ENCODE measurements at regions of chr9 and their contacts with region 1.

Region 1: GRCh38 chr9:136283291-136284235 is 20.3 kb downstream of the CCDC187 start:
- DNase-seq: peak; percentile 89
- ATAC-seq: peak; percentile 84
- H3K4me3 ChIP-seq: peak overlapping the region in 4 of 5 experiments; percentile 10 to 53 (median 39)
- H3K4me3 Mint-ChIP-seq: peak overlapping the region; percentile 94
- H3K27ac ChIP-seq: peak overlapping the region in 1 of 2 donors; percentile 33
- H3K27ac Mint-ChIP-seq: peak overlapping the region; percentile 86
- H3K4me1 ChIP-seq: peaks cover 18 to 25% of the 10 kb centered on the region in 2 donors
- H3K4me1 Mint-ChIP-seq: peaks cover 23% of the 10 kb centered on the region
- H3K27me3 ChIP-seq: peaks cover 0 to 3% (median 0%) of the 10 kb centered on the region in 4 experiments
- H3K27me3 Mint-ChIP-seq: peaks cover 13% of the 10 kb centered on the region
- CTCF ChIP-seq: peak; percentile 92

Region 2: GRCh38 chr9:135971892-135972291 is 311.7 kb before region 1 on chr9:
- CTCF ChIA-PET with region 1: interaction called, 9 read pairs
- POLR2A ChIA-PET with region 1: no interaction called
- intact Hi-C with region 1: loop called (anchors 1 kb)
- DNase-seq: peak; percentile 57
- ATAC-seq: no peak
- H3K4me3 ChIP-seq: no peak overlapping the region
- H3K4me3 Mint-ChIP-seq: no peak overlapping the region
- H3K27ac ChIP-seq: no peak overlapping the region
- H3K27ac Mint-ChIP-seq: no peak overlapping the region
- H3K4me1 ChIP-seq: peaks cover 0 to 8% of the 10 kb centered on the region in 2 donors
- H3K4me1 Mint-ChIP-seq: peaks cover 7% of the 10 kb centered on the region
- H3K27me3 ChIP-seq: peaks cover 0 to 17% (median 1%) of the 10 kb centered on the region in 4 experiments
- H3K27me3 Mint-ChIP-seq: peaks cover 29% of the 10 kb centered on the region
- CTCF ChIP-seq: no peak

Region 3: GRCh38 chr9:136096505-136097001 is 187.0 kb before region 1 on chr9:
- CTCF ChIA-PET with region 1: no interaction called
- POLR2A ChIA-PET with region 1: no interaction called
- intact Hi-C with region 1: no loop called
- DNase-seq: no peak
- ATAC-seq: no peak
- H3K4me3 ChIP-seq: no peak overlapping the region
- H3K4me3 Mint-ChIP-seq: peak overlapping the region; percentile 44
- H3K27ac ChIP-seq: no peak overlapping the region
- H3K27ac Mint-ChIP-seq: no peak overlapping the region
- H3K4me1 ChIP-seq: peaks cover 10 to 12% of the 10 kb centered on the region in 2 donors
- H3K4me1 Mint-ChIP-seq: peaks cover 6% of the 10 kb centered on the region
- H3K27me3 ChIP-seq: peaks cover 0 to 41% (median 8%) of the 10 kb centered on the region in 4 experiments
- H3K27me3 Mint-ChIP-seq: peaks cover 20% of the 10 kb centered on the region
- CTCF ChIP-seq: no peak

Region 4: GRCh38 chr9:136133191-136133958 is 150.2 kb before region 1 on chr9:
- CTCF ChIA-PET with region 1: interaction called, 25 read pairs
- POLR2A ChIA-PET with region 1: no interaction called
- intact Hi-C with region 1: loop called (anchors 1 kb)
- DNase-seq: peak; percentile 61
- ATAC-seq: peak; percentile 68
- H3K4me3 ChIP-seq: peak overlapping the region in 4 of 5 experiments; percentile 11 to 56 (median 42)
- H3K4me3 Mint-ChIP-seq: peak overlapping the region; percentile 64
- H3K27ac ChIP-seq: no peak overlapping the region
- H3K27ac Mint-ChIP-seq: no peak overlapping the region
- H3K4me1 ChIP-seq: peaks cover 9 to 18% of the 10 kb centered on the region in 2 donors
- H3K4me1 Mint-ChIP-seq: peaks cover 10% of the 10 kb centered on the region
- H3K27me3 ChIP-seq: peaks cover 0 to 48% (median 13%) of the 10 kb centered on the region in 4 experiments
- H3K27me3 Mint-ChIP-seq: peaks cover 40% of the 10 kb centered on the region
- CTCF ChIP-seq: peak; percentile 51

Region 5: DNA sequence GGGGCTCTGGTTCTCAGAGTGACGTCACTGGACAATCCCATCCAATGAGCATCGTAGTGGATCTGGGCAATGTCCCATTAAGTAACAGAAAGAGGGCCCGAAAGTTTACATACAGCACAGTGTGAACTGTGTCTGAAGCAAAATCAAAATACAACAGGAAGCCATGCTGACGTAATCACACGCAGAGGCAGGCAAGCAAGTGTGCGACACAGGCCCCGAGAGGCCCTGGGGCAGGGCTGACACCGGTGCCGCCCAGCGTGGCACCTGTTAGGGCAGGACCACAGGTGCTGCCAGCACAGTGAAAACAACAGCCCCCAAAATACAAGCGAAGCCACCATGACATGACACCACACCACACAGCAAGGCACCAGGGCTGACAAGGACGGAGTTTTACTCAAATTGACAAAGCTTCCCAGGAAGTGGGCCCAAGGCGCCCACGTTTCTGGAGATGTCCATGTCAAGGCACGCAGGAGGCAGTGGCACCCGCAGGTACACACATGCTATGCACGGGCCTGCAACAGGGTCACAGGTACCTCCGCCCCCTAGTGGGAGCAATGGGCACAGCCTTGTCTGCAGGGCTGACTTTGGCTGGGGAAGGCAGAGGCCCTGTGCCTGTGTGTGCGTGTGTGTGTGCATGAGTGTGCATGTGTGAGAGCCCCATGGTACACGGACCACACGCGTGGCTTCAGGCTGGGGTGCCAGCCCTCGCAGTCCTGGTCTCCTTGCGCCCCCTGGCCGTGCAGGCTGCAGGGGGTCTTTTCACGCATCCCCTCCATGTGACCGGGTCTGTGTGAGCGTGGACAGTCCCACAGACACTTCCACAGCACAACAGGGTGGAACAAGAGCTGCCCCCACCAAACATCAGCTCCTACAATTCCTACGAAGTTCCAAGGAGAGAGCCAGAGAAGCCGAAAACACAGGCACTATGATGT is 57.5 kb before region 1 on chr9:
- CTCF ChIA-PET with region 1: interaction called, 9 read pairs
- POLR2A ChIA-PET with region 1: no interaction called
- intact Hi-C with region 1: loop called (anchors 1 kb)
- DNase-seq: peak; percentile 95
- ATAC-seq: peak; percentile 76
- H3K4me3 ChIP-seq: peak overlapping the region in 4 of 5 experiments; percentile 19 to 47 (median 35)
- H3K4me3 Mint-ChIP-seq: peak overlapping the region; percentile 86
- H3K27ac ChIP-seq: peak overlapping the region; percentile 95 to 100
- H3K27ac Mint-ChIP-seq: peak overlapping the region; percentile 98
- H3K4me1 ChIP-seq: peaks cover 40 to 73% of the 10 kb centered on the region in 2 donors
- H3K4me1 Mint-ChIP-seq: peaks cover 79% of the 10 kb centered on the region
- H3K27me3 ChIP-seq: no peaks in the 10 kb centered on the region
- H3K27me3 Mint-ChIP-seq: no peaks in the 10 kb centered on the region
- CTCF ChIP-seq: peak; percentile 94

Region 6: GRCh38 chr9:136267261-136268111 is 16.1 kb before region 1 on chr9:
- CTCF ChIA-PET with region 1: interaction called, 26 read pairs
- POLR2A ChIA-PET with region 1: interaction called, 5 read pairs
- intact Hi-C with region 1: loop called (anchors 1 kb)
- DNase-seq: peak; percentile 90
- ATAC-seq: peak; percentile 98
- H3K4me3 ChIP-seq: peak overlapping the region in 4 of 5 experiments; percentile 55 to 69 (median 62)
- H3K4me3 Mint-ChIP-seq: peak overlapping the region; percentile 85
- H3K27ac ChIP-seq: peak overlapping the region; percentile 50 to 66
- H3K27ac Mint-ChIP-seq: peak overlapping the region; percentile 84
- H3K4me1 ChIP-seq: peaks cover 7 to 16% of the 10 kb centered on the region in 2 donors
- H3K4me1 Mint-ChIP-seq: peaks cover 11% of the 10 kb centered on the region
- H3K27me3 ChIP-seq: no peaks in the 10 kb centered on the region
- H3K27me3 Mint-ChIP-seq: peaks cover 3% of the 10 kb centered on the region
- CTCF ChIP-seq: peak; percentile 38

Region 7: DNA sequence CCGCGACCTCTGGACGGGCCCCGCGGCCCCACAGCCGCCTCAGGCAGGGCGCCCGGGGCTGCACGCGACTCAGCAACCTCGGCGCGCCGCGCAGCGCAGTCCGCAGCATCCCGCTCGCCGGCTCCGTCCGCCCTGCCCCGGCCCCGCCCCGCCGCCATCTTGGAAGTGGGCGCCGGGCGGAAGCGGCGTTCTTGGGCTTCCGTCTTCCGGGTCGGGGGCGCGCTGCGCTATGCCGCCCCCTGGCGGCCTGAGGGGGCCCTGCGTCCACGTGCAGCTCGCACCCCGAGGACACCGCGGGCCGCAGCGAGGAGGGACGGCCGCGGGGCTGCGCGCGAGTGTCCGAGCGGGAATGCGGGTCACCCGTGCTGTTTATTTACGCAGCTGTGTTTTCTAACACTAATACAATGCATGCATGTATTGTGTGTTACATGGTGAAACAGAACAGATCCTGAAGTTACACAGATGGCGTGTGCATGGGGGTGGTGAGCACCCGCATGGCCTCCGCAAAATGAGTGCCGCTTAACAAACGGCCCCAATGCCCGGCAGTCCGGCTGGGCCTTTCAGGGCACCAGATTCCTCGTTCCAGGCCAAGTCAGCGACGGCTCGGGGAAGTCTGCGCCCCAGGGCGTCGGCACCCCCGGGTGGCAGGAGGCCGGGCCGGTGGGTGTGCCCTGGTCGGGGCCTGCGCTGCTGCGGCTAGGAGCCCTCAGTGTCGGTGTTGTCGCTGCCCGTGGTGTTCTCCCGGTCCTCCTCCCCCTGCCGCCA is 80.2 kb after region 1 on chr9 and contains the start of gene DNLZ:
- CTCF ChIA-PET with region 1: interaction called, 12 read pairs
- POLR2A ChIA-PET with region 1: no interaction called
- intact Hi-C with region 1: no loop called
- DNase-seq: peak; percentile 93
- ATAC-seq: peak; percentile 70
- H3K4me3 ChIP-seq: peak within 1 kb of the TSS; percentile 3 to 97 (median 71)
- H3K4me3 Mint-ChIP-seq: peak within 1 kb of the TSS; percentile 89
- H3K27ac ChIP-seq: peak within 1 kb of the TSS; percentile 40 to 53
- H3K27ac Mint-ChIP-seq: peak within 1 kb of the TSS; percentile 93
- H3K4me1 ChIP-seq: peaks cover 5 to 10% of the 10 kb centered on the region in 2 donors
- H3K4me1 Mint-ChIP-seq: peaks cover 10% of the 10 kb centered on the region
- H3K27me3 ChIP-seq: no peaks in the 10 kb centered on the region
- H3K27me3 Mint-ChIP-seq: no peaks in the 10 kb centered on the region
- CTCF ChIP-seq: peak; percentile 97
- total RNA-seq, gene DNLZ: 23.0 and 25.4 TPM in 2 replicates

Region 8: GRCh38 chr9:136439550-136440408 is 156.2 kb after region 1 on chr9 and contains the start of gene INPP5E:
- CTCF ChIA-PET with region 1: no interaction called
- POLR2A ChIA-PET with region 1: no interaction called
- intact Hi-C with region 1: no loop called
- DNase-seq: peak; percentile 90
- ATAC-seq: peak; percentile 87
- H3K4me3 ChIP-seq: peak within 1 kb of the TSS; percentile 31 to 79 (median 70)
- H3K4me3 Mint-ChIP-seq: peak within 1 kb of the TSS; percentile 84
- H3K27ac ChIP-seq: peak within 1 kb of the TSS in 1 of 2 donors; percentile 55
- H3K27ac Mint-ChIP-seq: peak within 1 kb of the TSS; percentile 77
- H3K4me1 ChIP-seq: peaks cover 21 to 28% of the 10 kb centered on the region in 2 donors
- H3K4me1 Mint-ChIP-seq: peaks cover 26% of the 10 kb centered on the region
- H3K27me3 ChIP-seq: no peaks in the 10 kb centered on the region
- H3K27me3 Mint-ChIP-seq: no peaks in the 10 kb centered on the region
- CTCF ChIP-seq: peak; percentile 81
- total RNA-seq, gene INPP5E: 33.1 and 35.3 TPM in 2 replicates